ENCODE measurements at regions of chr5 and their contacts with region 1.

Region 1: GRCh38 chr5:173615884-173616576 is 420 bp downstream of the BOD1 start:
- DNase-seq: peak; percentile 87
- ATAC-seq: peak; percentile 34
- H3K4me3 ChIP-seq: peak overlapping the region; percentile 68 to 89 (median 83)
- H3K4me3 Mint-ChIP-seq: peak overlapping the region; percentile 98
- H3K27ac ChIP-seq: peak overlapping the region; percentile 88 to 96
- H3K27ac Mint-ChIP-seq: peak overlapping the region; percentile 97
- H3K4me1 ChIP-seq: peaks cover 21 to 29% of the 10 kb centered on the region in 2 donors
- H3K4me1 Mint-ChIP-seq: peaks cover 43% of the 10 kb centered on the region
- H3K27me3 ChIP-seq: no peaks in the 10 kb centered on the region
- H3K27me3 Mint-ChIP-seq: no peaks in the 10 kb centered on the region
- CTCF ChIP-seq: peak; percentile 77

Region 2: DNA sequence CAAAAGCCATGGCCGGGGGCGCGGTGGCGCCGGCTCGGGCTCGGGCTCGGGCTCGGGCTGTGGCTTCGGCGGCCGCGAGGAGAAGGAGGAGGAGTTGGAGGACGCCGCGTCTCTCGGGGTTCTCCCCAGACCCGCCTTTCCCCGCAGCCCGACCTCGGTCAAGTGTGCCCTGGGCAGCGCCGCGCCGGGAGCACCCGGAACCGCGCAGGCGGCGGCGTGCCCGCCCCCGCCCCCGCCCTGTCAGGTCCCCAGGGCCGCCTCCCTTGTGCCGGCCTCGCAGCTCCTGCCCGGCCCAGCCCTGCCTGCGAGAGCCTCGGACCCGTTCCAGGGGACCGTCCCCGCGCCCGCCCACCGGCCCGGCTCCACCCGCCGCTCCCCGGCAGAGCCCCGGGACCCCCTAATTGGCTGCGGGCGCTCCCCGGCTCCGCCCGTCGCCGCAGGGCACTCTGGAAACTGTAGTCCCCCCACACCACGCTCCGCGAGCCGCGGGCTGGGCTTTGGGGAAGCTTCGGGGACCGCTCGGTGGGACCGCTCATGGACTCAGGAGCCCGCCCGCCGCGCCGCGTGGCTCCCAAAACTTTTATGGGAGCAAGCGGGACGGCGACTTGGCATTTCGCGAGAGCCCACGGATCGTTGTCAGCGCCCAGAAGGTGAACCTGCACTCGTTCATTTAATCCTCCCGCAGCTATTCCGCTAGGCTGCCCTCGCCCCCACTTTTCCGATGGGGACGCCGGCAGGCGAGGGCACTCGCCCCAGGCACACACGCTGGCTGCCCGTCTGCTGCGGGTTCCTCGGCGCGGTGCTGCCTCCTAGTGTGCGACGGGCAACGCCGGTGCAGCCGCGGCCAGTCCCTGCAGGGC is 1427.8 kb before region 1 on chr5 and contains the start of gene STK10:
- CTCF ChIA-PET with region 1: no interaction called
- POLR2A ChIA-PET with region 1: no interaction called
- intact Hi-C with region 1: loop called (anchors 10 kb)
- DNase-seq: peak; percentile 94
- ATAC-seq: peak; percentile 81
- H3K4me3 ChIP-seq: peak within 1 kb of the TSS; percentile 88 to 99 (median 98)
- H3K4me3 Mint-ChIP-seq: peak within 1 kb of the TSS; percentile 100
- H3K27ac ChIP-seq: peak within 1 kb of the TSS; percentile 74 to 89
- H3K27ac Mint-ChIP-seq: peak within 1 kb of the TSS; percentile 99
- H3K4me1 ChIP-seq: peaks cover 35 to 48% of the 10 kb centered on the region in 2 donors
- H3K4me1 Mint-ChIP-seq: peaks cover 39% of the 10 kb centered on the region
- H3K27me3 ChIP-seq: no peaks in the 10 kb centered on the region
- H3K27me3 Mint-ChIP-seq: no peaks in the 10 kb centered on the region
- CTCF ChIP-seq: peak; percentile 87
- total RNA-seq, gene STK10: 253 and 261 TPM in 2 replicates

Region 3: DNA sequence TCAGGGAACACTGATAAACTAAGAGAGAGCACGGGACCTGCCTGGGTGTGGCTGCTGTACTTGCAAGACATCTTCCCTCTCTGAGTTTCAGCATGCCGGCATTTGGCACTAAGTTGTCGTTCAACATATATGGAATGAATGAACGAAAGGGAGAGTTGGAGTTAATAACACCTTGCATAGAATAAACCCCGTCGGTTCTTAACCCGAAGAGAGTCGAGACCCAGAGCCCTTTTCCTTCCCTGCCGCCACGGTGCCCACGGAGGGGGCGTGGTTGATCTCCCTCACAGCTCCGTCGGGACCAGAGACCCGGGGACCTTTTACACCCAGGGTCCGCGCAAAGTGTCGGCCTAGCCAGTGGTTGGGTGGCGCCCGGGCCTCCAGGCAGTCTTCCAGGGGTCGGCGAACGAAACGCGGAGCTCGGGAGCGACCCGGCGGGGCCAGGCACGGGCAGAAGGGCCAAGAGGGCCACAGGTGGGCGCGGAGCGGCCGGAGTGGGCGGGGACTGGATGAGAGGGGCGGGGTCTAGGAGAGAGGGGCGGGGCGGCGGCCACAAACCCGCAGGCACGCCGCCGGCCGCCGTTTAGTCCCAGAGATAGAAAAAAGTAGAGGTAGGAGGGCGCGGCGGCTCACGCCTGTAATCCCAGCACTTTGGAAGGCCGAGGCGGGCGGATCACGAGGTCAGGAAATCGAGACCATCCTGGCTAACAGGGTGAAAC is 657.5 kb before region 1 on chr5:
- CTCF ChIA-PET with region 1: no interaction called
- POLR2A ChIA-PET with region 1: no interaction called
- intact Hi-C with region 1: loop called (anchors 1 kb)
- DNase-seq: peak; percentile 82
- ATAC-seq: peak; percentile 73
- H3K4me3 ChIP-seq: peak overlapping the region; percentile 44 to 97 (median 85)
- H3K4me3 Mint-ChIP-seq: peak overlapping the region; percentile 97
- H3K27ac ChIP-seq: peak overlapping the region; percentile 54 to 81
- H3K27ac Mint-ChIP-seq: peak overlapping the region; percentile 96
- H3K4me1 ChIP-seq: peaks cover 8 to 18% of the 10 kb centered on the region in 2 donors
- H3K4me1 Mint-ChIP-seq: peaks cover 23% of the 10 kb centered on the region
- H3K27me3 ChIP-seq: no peaks in the 10 kb centered on the region
- H3K27me3 Mint-ChIP-seq: no peaks in the 10 kb centered on the region
- CTCF ChIP-seq: no peak

Region 4: DNA sequence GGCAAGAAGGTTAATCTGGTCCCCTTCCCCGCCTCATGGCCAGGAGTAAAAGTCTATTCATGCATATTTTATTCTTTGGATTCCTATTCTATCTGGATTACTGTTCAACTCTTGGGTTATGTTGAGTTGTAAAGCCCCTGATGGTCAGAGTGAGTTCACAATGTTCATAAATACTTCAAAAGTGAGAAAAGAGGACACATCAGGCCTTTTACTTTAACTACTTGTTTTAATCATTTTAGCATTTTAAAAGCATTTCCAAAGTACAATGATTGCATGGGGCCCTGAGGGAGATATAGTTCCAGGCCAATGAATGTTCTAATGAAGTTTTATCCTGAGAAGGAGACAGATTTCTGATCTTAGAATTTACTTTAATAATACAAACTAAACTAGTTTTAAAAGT is 93.5 kb before region 1 on chr5:
- CTCF ChIA-PET with region 1: no interaction called
- POLR2A ChIA-PET with region 1: no interaction called
- intact Hi-C with region 1: no loop called
- DNase-seq: no peak
- ATAC-seq: no peak
- H3K4me3 ChIP-seq: no peak overlapping the region
- H3K4me3 Mint-ChIP-seq: no peak overlapping the region
- H3K27ac ChIP-seq: no peak overlapping the region
- H3K27ac Mint-ChIP-seq: no peak overlapping the region
- H3K4me1 ChIP-seq: no peaks in the 10 kb centered on the region
- H3K4me1 Mint-ChIP-seq: no peaks in the 10 kb centered on the region
- H3K27me3 ChIP-seq: peaks cover 0 to 8% (median 0%) of the 10 kb centered on the region in 4 experiments
- H3K27me3 Mint-ChIP-seq: peaks cover 33% of the 10 kb centered on the region
- CTCF ChIP-seq: no peak

Region 5: GRCh38 chr5:173679909-173680630 is 64.0 kb after region 1 on chr5:
- CTCF ChIA-PET with region 1: interaction called, 4 read pairs
- POLR2A ChIA-PET with region 1: no interaction called
- intact Hi-C with region 1: loop called (anchors 5 kb)
- DNase-seq: peak; percentile 61
- ATAC-seq: peak; percentile 59
- H3K4me3 ChIP-seq: no peak overlapping the region
- H3K4me3 Mint-ChIP-seq: peak overlapping the region; percentile 70
- H3K27ac ChIP-seq: peak overlapping the region; percentile 81 to 88
- H3K27ac Mint-ChIP-seq: peak overlapping the region; percentile 94
- H3K4me1 ChIP-seq: peaks cover 17 to 20% of the 10 kb centered on the region in 2 donors
- H3K4me1 Mint-ChIP-seq: peaks cover 40% of the 10 kb centered on the region
- H3K27me3 ChIP-seq: no peaks in the 10 kb centered on the region
- H3K27me3 Mint-ChIP-seq: no peaks in the 10 kb centered on the region
- CTCF ChIP-seq: no peak

Region 6: GRCh38 chr5:173823711-173824528 is 207.9 kb after region 1 on chr5:
- CTCF ChIA-PET with region 1: interaction called, 3 read pairs
- POLR2A ChIA-PET with region 1: interaction called, 5 read pairs
- intact Hi-C with region 1: loop called (anchors 2 kb)
- DNase-seq: no peak
- ATAC-seq: no peak
- H3K4me3 ChIP-seq: no peak overlapping the region
- H3K4me3 Mint-ChIP-seq: peak overlapping the region; percentile 9
- H3K27ac ChIP-seq: peak overlapping the region; percentile 12 to 55
- H3K27ac Mint-ChIP-seq: peak overlapping the region; percentile 46
- H3K4me1 ChIP-seq: peaks cover 69 to 73% of the 10 kb centered on the region in 2 donors
- H3K4me1 Mint-ChIP-seq: peaks cover 74% of the 10 kb centered on the region
- H3K27me3 ChIP-seq: no peaks in the 10 kb centered on the region
- H3K27me3 Mint-ChIP-seq: no peaks in the 10 kb centered on the region
- CTCF ChIP-seq: no peak

Region 7: GRCh38 chr5:173907686-173908371 is 291.8 kb after region 1 on chr5:
- CTCF ChIA-PET with region 1: no interaction called
- POLR2A ChIA-PET with region 1: no interaction called
- intact Hi-C with region 1: no loop called
- DNase-seq: peak; percentile 23
- ATAC-seq: no peak
- H3K4me3 ChIP-seq: no peak overlapping the region
- H3K4me3 Mint-ChIP-seq: peak overlapping the region; percentile 35
- H3K27ac ChIP-seq: peak overlapping the region in 1 of 2 donors; percentile 29
- H3K27ac Mint-ChIP-seq: peak overlapping the region; percentile 57
- H3K4me1 ChIP-seq: peaks cover 21 to 26% of the 10 kb centered on the region in 2 donors
- H3K4me1 Mint-ChIP-seq: peaks cover 31% of the 10 kb centered on the region
- H3K27me3 ChIP-seq: no peaks in the 10 kb centered on the region
- H3K27me3 Mint-ChIP-seq: no peaks in the 10 kb centered on the region
- CTCF ChIP-seq: no peak

Region 8: GRCh38 chr5:173917788-173918786 is 302.1 kb after region 1 on chr5:
- CTCF ChIA-PET with region 1: interaction called, 201 read pairs
- POLR2A ChIA-PET with region 1: interaction called, 5 read pairs
- intact Hi-C with region 1: loop called (anchors 1 kb)
- DNase-seq: peak; percentile 92
- ATAC-seq: peak; percentile 89
- H3K4me3 ChIP-seq: peak overlapping the region; percentile 43 to 81 (median 62)
- H3K4me3 Mint-ChIP-seq: no peak overlapping the region
- H3K27ac ChIP-seq: peak overlapping the region; percentile 82 to 95
- H3K27ac Mint-ChIP-seq: no peak overlapping the region
- H3K4me1 ChIP-seq: peaks cover 18 to 24% of the 10 kb centered on the region in 2 donors
- H3K4me1 Mint-ChIP-seq: peaks cover 22% of the 10 kb centered on the region
- H3K27me3 ChIP-seq: no peaks in the 10 kb centered on the region
- H3K27me3 Mint-ChIP-seq: no peaks in the 10 kb centered on the region
- CTCF ChIP-seq: no peak

Region 9: DNA sequence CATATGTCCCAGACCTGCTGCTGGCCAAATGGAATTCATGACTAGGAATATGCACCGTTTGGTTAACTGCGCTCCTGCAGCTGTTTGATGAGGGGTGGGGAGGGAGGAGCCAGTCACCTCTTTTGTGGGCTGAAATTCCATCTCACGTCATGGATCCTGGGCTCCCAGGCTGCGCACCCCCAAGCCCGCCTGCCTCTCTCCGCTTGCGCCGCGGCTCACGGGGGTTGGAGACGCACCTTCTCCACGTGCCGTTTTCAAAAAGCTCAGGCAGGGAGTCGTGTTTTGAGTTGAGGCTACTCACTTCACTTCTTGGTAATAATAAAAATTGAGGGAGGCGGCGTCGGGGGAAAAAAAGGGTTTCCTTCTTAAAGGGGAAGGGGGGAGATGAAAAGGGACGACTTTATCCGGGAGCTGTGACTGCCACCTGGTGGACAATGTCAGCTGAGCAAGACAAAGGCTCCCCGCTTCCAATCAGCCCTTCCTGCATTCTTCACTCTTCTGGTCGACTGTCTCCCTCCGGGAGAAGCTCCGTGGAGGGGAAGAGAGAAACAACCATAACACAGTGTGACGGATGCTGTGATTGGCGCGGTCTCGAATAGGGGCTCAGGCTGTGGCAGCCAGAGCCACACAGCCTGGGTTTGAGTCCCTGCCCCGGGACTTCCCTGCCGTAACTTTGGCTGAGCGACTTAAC is 357.0 kb after region 1 on chr5:
- CTCF ChIA-PET with region 1: interaction called, 201 read pairs
- POLR2A ChIA-PET with region 1: interaction called, 3 read pairs
- intact Hi-C with region 1: loop called (anchors 1 kb)
- DNase-seq: peak; percentile 87
- ATAC-seq: peak; percentile 85
- H3K4me3 ChIP-seq: peak overlapping the region in 4 of 5 experiments; percentile 14 to 50 (median 40)
- H3K4me3 Mint-ChIP-seq: peak overlapping the region; percentile 85
- H3K27ac ChIP-seq: no peak overlapping the region
- H3K27ac Mint-ChIP-seq: no peak overlapping the region
- H3K4me1 ChIP-seq: peaks cover 13 to 14% of the 10 kb centered on the region in 2 donors
- H3K4me1 Mint-ChIP-seq: peaks cover 11% of the 10 kb centered on the region
- H3K27me3 ChIP-seq: peaks cover 0 to 7% (median 3%) of the 10 kb centered on the region in 4 experiments
- H3K27me3 Mint-ChIP-seq: peaks cover 27% of the 10 kb centered on the region
- CTCF ChIP-seq: peak; percentile 87

Region 10: GRCh38 chr5:174636086-174636485 is 1020.1 kb after region 1 on chr5:
- CTCF ChIA-PET with region 1: no interaction called
- POLR2A ChIA-PET with region 1: no interaction called
- intact Hi-C with region 1: no loop called
- DNase-seq: no peak
- ATAC-seq: no peak
- H3K4me3 ChIP-seq: no peak overlapping the region
- H3K4me3 Mint-ChIP-seq: no peak overlapping the region
- H3K27ac ChIP-seq: no peak overlapping the region
- H3K27ac Mint-ChIP-seq: no peak overlapping the region
- H3K4me1 ChIP-seq: no peaks in the 10 kb centered on the region
- H3K4me1 Mint-ChIP-seq: no peaks in the 10 kb centered on the region
- H3K27me3 ChIP-seq: no peaks in the 10 kb centered on the region
- H3K27me3 Mint-ChIP-seq: no peaks in the 10 kb centered on the region
- CTCF ChIP-seq: no peak

Measured in B cell (primary cell).